Dendritic cell treated with granulocyte-macrophage colony-stimulating factor and Interleukin-4, amounts not matched to agents 40 ng/mL and 50 ng/mL, for 4 days (primary cell): ENCODE measurements at regions of chr15 and their contacts with region 1.

Region 1: DNA sequence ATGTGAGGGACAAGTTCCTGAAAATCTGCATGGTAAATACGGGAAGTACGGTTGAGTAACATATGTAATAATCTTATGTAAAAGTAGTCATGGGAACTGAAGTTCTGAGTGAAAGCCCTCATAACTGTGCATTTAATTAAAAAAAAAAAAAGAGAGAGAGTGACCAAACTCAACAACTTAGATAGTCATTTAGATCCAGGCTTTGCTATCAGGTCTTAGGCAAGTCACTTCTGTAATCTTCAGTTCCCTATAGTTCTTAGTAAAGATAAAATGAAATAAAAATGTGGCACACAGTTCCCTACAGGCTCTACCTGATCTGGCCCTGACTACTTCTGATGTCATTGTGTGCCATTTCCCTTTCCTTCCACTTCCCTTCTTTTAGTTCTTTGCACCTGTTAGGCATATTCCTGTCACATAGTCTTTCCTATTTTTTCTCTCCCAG is 15.0 kb downstream of the RNF111 start:
- H3K4me3 Mint-ChIP-seq: no peak overlapping the region
- H3K27ac Mint-ChIP-seq: peak overlapping the region; percentile 58
- H3K4me1 Mint-ChIP-seq: peaks cover 65% of the 10 kb centered on the region
- H3K27me3 Mint-ChIP-seq: no peaks in the 10 kb centered on the region

Region 2: GRCh38 chr15:59013246-59013873 is 10.9 kb after region 1 on chr15:
- intact Hi-C with region 1: no loop called
- H3K4me3 Mint-ChIP-seq: no peak overlapping the region
- H3K27ac Mint-ChIP-seq: no peak overlapping the region
- H3K4me1 Mint-ChIP-seq: peaks cover 19% of the 10 kb centered on the region
- H3K27me3 Mint-ChIP-seq: no peaks in the 10 kb centered on the region

Region 3: GRCh38 chr15:59051873-59052861 is 49.7 kb after region 1 on chr15:
- intact Hi-C with region 1: loop called (anchors 10 kb)
- H3K4me3 Mint-ChIP-seq: no peak overlapping the region
- H3K27ac Mint-ChIP-seq: no peak overlapping the region
- H3K4me1 Mint-ChIP-seq: no peaks in the 10 kb centered on the region
- H3K27me3 Mint-ChIP-seq: no peaks in the 10 kb centered on the region